Caco-2 (cell line): ENCODE measurements at regions of chr5 and their contacts with region 1.

Region 1: DNA sequence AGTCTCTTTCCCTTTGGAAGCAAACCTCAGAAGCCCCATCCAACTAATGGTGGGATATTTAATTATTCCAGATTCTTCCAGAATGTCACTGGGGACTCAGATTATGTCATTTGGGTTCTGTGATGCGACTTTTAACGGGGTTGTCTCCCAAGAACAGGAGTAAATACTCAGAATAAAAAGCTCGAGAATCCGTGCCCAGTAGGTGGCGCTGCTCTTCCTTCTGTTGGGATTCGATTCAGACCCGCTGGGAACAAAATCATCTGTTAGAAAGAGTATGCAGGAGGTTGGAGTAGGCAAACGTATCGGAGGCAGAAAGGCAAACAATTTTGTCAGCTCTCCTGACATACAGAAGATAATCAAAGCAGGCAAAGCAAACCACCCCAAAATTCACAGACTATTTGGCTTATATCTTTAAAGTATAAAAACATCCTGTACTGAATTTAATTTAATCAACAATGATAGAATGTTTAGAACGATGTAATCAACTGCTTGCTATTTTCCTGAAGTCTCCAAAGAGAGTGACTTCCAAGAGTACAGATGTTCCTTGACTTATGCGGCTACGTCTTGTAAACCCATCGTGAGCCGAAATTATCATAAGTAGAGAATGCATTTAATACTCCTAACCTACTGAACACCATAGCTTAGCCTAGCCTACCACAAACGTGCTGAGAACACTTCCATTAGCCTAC is 169.8 kb upstream of the RAI14 start:
- DNase-seq: peak; percentile 84 to 85
- H3K4me3 ChIP-seq: no peak overlapping the region
- H3K4me3 Mint-ChIP-seq: peak overlapping the region; percentile 41
- H3K27ac Mint-ChIP-seq: peak overlapping the region; percentile 68
- H3K4me1 ChIP-seq: peaks cover 47% of the 10 kb centered on the region
- H3K4me1 Mint-ChIP-seq: peaks cover 51% of the 10 kb centered on the region
- H3K27me3 ChIP-seq: no peaks in the 10 kb centered on the region
- H3K27me3 Mint-ChIP-seq: no peaks in the 10 kb centered on the region
- CTCF ChIP-seq: peak; percentile 85 to 86

Region 2: DNA sequence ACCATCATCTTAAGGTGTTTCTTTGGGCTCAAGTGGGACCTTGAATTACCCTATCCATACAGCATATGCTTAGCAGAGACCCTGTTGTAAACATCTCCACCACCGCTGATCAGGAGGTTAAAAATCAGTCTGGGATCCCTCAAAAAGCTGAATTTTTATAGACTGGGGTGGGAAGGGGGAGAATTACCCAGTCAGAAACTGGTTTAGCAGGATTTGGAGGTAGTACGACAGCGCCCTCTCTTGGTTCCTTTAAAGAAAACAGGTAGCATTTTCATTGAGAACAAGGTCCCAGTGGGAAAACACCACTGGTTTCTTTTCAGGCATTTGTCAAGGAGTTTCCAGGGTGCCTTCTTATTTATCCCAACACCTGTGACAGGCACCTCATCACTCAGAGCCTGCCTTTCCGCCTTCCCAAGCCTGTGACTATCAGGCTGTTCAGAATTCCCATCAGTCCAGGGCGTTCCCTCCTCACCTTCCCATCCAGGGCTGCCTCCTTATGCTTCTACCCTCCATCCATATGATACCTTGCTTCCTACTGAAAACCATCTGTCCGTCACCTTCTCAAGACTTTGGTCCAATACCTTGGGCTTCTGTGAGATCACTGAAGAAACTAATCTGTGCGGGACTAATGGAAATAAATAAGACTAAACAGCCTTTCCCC is 34.0 kb before region 1 on chr5:
- CTCF ChIA-PET with region 1: no interaction called
- POLR2A ChIA-PET with region 1: no interaction called
- intact Hi-C with region 1: no loop called
- DNase-seq: peak in 1 of 2 experiments; percentile 54
- H3K4me3 ChIP-seq: no peak overlapping the region
- H3K4me3 Mint-ChIP-seq: no peak overlapping the region
- H3K27ac Mint-ChIP-seq: no peak overlapping the region
- H3K4me1 ChIP-seq: peaks cover 8% of the 10 kb centered on the region
- H3K4me1 Mint-ChIP-seq: no peaks in the 10 kb centered on the region
- H3K27me3 ChIP-seq: no peaks in the 10 kb centered on the region
- H3K27me3 Mint-ChIP-seq: no peaks in the 10 kb centered on the region
- CTCF ChIP-seq: peak; percentile 49 to 69

Region 3: DNA sequence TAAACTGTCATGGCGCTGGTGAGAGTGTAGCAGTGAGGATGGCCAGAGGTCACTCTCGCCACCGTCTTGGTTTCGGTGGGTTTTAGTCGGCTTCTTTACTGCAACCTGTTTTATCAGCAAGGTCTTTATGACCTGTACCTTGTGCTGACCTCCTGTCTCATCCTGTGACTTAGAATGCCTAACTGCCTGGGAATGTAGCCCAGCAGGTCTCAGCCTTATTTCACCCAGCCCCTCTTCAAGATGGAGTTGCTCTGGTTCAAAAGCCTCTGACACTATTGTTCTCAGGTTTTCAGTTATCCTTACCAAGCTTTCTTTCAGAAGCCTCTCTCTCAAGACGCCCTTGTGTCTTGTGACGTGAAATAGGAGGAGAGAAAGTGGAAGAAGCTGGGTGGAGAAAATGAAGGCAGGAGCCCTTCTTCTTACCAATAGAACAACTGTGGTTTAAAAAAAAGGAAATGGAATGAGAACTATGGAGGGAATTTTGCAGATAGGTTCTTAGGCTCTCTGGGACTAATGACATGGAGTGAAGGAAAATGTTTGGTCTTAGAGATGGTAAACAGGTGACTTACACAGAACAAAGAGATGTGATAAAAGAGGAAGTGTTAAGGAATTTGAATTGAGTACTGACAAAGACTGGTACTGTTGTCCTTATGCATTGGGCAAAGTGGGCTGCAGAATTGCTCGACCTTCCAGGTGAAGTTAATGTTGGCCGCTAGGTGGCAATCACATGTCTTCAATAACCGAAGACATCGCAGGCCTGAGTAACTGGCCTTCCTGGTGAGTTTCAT is 36.5 kb after region 1 on chr5:
- CTCF ChIA-PET with region 1: interaction called, 4 read pairs
- POLR2A ChIA-PET with region 1: no interaction called
- intact Hi-C with region 1: loop called (anchors 1 kb)
- DNase-seq: peak; percentile 86 to 90
- H3K4me3 ChIP-seq: no peak overlapping the region
- H3K4me3 Mint-ChIP-seq: peak overlapping the region; percentile 50
- H3K27ac Mint-ChIP-seq: peak overlapping the region; percentile 90
- H3K4me1 ChIP-seq: peaks cover 34% of the 10 kb centered on the region
- H3K4me1 Mint-ChIP-seq: peaks cover 39% of the 10 kb centered on the region
- H3K27me3 ChIP-seq: no peaks in the 10 kb centered on the region
- H3K27me3 Mint-ChIP-seq: no peaks in the 10 kb centered on the region
- CTCF ChIP-seq: peak; percentile 66 to 89

Region 4: DNA sequence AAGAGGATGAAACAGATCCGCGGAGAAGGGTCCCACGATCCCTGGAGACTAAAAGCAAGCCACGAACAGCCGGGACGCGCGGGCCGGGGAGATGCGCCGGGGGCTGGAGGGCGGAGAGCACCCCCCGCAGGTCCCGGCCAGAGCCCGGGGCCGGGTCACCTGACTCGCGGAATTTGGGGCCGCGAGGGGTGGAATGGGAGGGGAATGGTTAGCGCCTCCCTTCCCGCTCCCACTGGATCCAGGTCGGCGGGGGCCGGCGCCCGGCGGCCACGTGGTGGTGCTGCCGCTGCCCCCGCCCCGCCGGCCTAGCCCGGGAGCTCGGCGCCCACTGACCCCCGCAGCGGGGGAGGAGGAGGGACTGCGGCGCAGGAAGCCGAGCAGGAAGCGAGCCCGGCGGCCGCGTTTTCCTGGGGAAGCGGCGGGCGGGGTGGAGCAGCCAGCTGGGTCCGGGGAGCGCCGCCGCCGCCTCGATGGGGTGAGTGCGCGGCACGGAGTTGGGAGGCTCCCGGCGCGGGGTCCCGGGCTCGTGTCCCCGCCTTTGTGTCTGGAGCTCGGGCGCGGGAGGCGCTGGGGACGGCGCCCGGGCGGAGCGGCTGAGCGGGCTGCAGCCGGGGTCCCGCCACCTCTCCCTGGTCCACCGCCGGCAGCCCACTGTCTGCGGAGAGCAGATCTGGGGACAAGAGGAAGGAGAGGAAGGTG is 169.8 kb after region 1 on chr5 and contains the start of gene RAI14:
- CTCF ChIA-PET with region 1: interaction called, 5 read pairs
- POLR2A ChIA-PET with region 1: no interaction called
- intact Hi-C with region 1: loop called (anchors 2 kb)
- DNase-seq: peak; percentile 90 to 93
- H3K4me3 ChIP-seq: peak within 1 kb of the TSS; percentile 94
- H3K4me3 Mint-ChIP-seq: peak within 1 kb of the TSS; percentile 69
- H3K27ac Mint-ChIP-seq: peak within 1 kb of the TSS; percentile 48
- H3K4me1 ChIP-seq: peaks cover 12% of the 10 kb centered on the region; the same call in 1 of the 2 replicates
- H3K4me1 Mint-ChIP-seq: peaks cover 14% of the 10 kb centered on the region
- H3K27me3 ChIP-seq: no peaks in the 10 kb centered on the region
- H3K27me3 Mint-ChIP-seq: no peaks in the 10 kb centered on the region
- CTCF ChIP-seq: no peak
- total RNA-seq, gene RAI14: 71.5 and 73.9 TPM in 2 replicates

Region 5: GRCh38 chr5:34699155-34700077 is 213.1 kb after region 1 on chr5:
- CTCF ChIA-PET with region 1: no interaction called
- POLR2A ChIA-PET with region 1: no interaction called
- intact Hi-C with region 1: loop called (anchors 2 kb)
- DNase-seq: peak; percentile 83 to 87
- H3K4me3 ChIP-seq: no peak overlapping the region
- H3K4me3 Mint-ChIP-seq: peak overlapping the region; percentile 68
- H3K27ac Mint-ChIP-seq: peak overlapping the region; percentile 62
- H3K4me1 ChIP-seq: peaks cover 65% of the 10 kb centered on the region
- H3K4me1 Mint-ChIP-seq: peaks cover 50% of the 10 kb centered on the region
- H3K27me3 ChIP-seq: no peaks in the 10 kb centered on the region
- H3K27me3 Mint-ChIP-seq: no peaks in the 10 kb centered on the region
- CTCF ChIP-seq: no peak

Region 6: DNA sequence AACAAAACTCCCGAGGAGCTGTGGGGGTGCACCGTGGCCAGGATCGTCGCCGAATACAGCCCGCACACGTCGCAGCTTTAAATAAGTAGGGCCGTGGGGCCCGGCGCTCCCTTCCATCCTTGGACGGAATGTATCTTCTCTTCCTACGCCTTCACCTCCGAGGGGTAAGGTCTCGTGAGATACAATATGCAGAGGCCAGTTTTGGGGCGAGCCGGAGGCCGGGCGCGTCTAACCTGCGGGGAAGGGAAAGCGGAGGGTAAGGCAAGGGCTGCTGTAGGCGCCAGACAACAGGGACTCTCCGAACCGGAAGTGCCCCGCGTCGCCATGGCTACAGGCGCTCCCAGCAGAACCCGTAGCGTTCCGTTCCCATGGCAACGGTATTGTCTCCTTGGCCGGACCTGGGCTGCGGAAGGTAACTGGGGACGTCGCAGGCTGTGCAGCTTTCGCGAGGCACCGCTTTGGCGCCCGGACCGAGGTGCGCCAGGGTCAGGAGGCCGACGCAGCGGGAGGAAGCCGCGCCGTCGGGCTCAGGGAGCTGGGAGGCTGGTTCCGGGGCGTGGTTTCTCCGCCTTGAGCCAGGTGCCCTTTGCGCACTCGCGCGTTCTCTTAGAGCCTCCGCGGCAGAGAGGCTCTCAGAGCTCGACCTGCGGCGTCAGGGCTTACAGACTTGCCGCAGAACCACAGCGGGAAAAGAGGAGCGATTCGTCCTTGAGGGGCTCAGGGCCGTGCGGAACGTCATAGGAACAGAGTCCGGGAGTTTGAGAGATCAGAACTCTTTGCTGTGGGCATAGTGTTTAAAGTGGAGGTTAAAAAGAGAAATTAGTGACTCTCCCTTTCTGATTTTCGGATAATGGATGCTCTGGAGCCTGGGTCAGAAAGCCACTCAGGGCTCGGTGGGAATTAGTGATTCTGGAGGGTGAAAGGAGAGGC is 352.7 kb after region 1 on chr5 and contains the start of gene TTC23L:
- CTCF ChIA-PET with region 1: no interaction called
- POLR2A ChIA-PET with region 1: no interaction called
- intact Hi-C with region 1: loop called (anchors 5 kb)
- DNase-seq: peak; percentile 92 to 93
- H3K4me3 ChIP-seq: peak within 1 kb of the TSS; percentile 72
- H3K4me3 Mint-ChIP-seq: peak within 1 kb of the TSS; percentile 86
- H3K27ac Mint-ChIP-seq: peak within 1 kb of the TSS; percentile 96
- H3K4me1 ChIP-seq: peaks cover 6% of the 10 kb centered on the region; the same call in 1 of the 2 replicates
- H3K4me1 Mint-ChIP-seq: peaks cover 13% of the 10 kb centered on the region
- H3K27me3 ChIP-seq: no peaks in the 10 kb centered on the region
- H3K27me3 Mint-ChIP-seq: no peaks in the 10 kb centered on the region
- CTCF ChIP-seq: no peak
- total RNA-seq, gene TTC23L: 0.09 and 0.72 TPM in 2 replicates

Region 7: GRCh38 chr5:34929150-34929719 is 442.9 kb after region 1 on chr5 and contains the start of gene DNAJC21:
- CTCF ChIA-PET with region 1: interaction called, 3 read pairs
- POLR2A ChIA-PET with region 1: interaction called, 11 read pairs
- intact Hi-C with region 1: no loop called
- DNase-seq: peak; percentile 98
- H3K4me3 ChIP-seq: peak within 1 kb of the TSS; percentile 99
- H3K4me3 Mint-ChIP-seq: peak within 1 kb of the TSS; percentile 70
- H3K27ac Mint-ChIP-seq: peak within 1 kb of the TSS; percentile 23
- H3K4me1 ChIP-seq: peaks cover 17% of the 10 kb centered on the region; the same call in 1 of the 2 replicates
- H3K4me1 Mint-ChIP-seq: peaks cover 15% of the 10 kb centered on the region
- H3K27me3 ChIP-seq: no peaks in the 10 kb centered on the region
- H3K27me3 Mint-ChIP-seq: no peaks in the 10 kb centered on the region
- CTCF ChIP-seq: no peak
- total RNA-seq, gene DNAJC21: 62.3 and 66.0 TPM in 2 replicates